MCF 10A (cell line): ENCODE measurements at regions of chr22 and their contacts with region 1.

Region 1: DNA sequence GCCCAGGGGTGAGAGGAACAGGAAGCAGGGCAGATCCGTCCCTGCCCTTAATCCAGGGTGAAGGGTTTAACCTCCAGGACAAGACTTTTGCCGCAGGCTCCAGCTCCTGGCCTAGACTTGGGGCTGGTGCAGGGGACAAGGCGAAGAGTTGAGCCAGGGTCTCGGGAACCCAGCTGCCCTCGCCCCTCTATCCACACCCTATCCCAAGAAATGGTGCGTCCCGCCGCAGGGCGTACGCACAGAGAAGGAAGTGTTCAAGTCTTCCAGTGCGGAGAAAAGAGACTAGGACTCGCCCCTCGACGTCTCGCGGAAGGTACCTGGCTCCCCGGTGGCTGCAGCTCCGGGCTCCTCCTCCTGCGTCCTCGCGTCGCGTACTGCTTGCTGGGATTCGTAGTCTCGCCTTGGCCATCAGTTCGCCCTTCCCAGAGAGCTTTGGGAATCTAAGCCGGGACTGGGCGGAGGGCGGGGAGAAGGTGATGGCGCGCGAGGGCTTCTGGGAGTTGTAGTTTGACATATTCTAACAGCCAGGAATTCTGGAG is at the start of gene ZMAT5:
- DNase-seq: peak; percentile 99
- H3K4me3 Mint-ChIP-seq: peak within 1 kb of the TSS; percentile 99
- H3K27ac Mint-ChIP-seq: peak within 1 kb of the TSS; percentile 100
- H3K4me1 Mint-ChIP-seq: peaks cover 11% of the 10 kb centered on the region
- H3K27me3 Mint-ChIP-seq: no peaks in the 10 kb centered on the region
- CTCF ChIP-seq: no peak
- total RNA-seq, gene ZMAT5: 19.0 and 25.6 TPM in 2 replicates

Region 2: DNA sequence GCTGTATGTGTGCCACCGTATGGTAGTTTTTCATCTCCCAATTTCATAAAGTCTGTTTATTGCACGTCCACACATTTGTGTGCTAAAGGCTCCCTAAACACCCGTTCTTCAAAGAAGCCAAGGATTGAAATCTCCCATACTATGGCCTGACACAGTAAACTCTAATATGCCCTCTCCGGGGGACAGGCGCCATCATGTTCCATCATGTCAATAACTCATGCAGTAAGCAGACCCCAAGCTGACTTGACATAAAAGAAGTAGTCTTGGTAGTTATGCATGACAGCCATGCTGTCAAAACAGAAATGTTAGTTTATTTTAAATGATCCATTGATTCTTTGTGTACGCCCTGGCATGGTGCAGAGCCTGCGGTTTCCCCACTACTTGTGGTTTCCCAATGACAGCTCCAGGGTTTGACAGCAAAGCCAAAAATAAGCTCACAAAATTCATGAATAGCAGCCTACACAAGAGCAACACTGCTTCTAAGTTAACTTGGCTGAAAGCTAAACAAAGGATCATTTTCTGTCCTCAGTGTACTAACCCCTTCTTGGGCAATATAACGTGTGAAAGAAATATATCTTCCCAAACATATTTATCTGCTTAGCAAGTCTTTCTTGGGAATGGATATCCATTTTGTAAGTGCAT is 103.4 kb before region 1 on chr22:
- CTCF ChIA-PET with region 1: no interaction called
- POLR2A ChIA-PET with region 1: no interaction called
- intact Hi-C with region 1: no loop called
- DNase-seq: no peak
- H3K4me3 Mint-ChIP-seq: no peak overlapping the region
- H3K27ac Mint-ChIP-seq: no peak overlapping the region
- H3K4me1 Mint-ChIP-seq: no peaks in the 10 kb centered on the region
- H3K27me3 Mint-ChIP-seq: no peaks in the 10 kb centered on the region
- CTCF ChIP-seq: no peak

Region 3: DNA sequence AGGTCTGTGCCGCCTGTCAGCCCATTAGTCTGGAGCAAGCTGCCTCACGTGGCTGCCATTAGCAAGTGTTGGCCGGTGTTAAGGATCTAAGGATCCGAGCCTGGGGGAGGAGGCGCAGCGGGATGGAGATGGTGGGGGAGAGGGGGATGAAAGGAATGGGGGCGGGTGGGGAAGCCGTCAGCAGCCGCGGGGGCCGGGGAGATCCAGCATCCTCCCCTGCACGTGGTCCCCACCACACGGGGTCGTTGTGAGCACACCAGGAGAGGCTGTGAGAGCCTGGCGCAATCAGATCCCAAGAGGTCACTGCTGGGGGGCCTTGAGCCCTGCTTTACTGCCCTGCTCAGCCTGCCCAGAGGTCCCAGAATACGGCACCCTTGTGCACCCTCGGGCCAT is 39.6 kb before region 1 on chr22:
- CTCF ChIA-PET with region 1: no interaction called
- POLR2A ChIA-PET with region 1: no interaction called
- intact Hi-C with region 1: no loop called
- DNase-seq: peak; percentile 31
- H3K4me3 Mint-ChIP-seq: no peak overlapping the region
- H3K27ac Mint-ChIP-seq: no peak overlapping the region
- H3K4me1 Mint-ChIP-seq: no peaks in the 10 kb centered on the region
- H3K27me3 Mint-ChIP-seq: no peaks in the 10 kb centered on the region
- CTCF ChIP-seq: peak; percentile 23

Region 4: GRCh38 chr22:29744902-29745301 is 21.8 kb before region 1 on chr22:
- CTCF ChIA-PET with region 1: no interaction called
- POLR2A ChIA-PET with region 1: interaction called, 16 read pairs
- intact Hi-C with region 1: no loop called
- DNase-seq: peak; percentile 91
- H3K4me3 Mint-ChIP-seq: peak overlapping the region; percentile 21
- H3K27ac Mint-ChIP-seq: peak overlapping the region; percentile 81
- H3K4me1 Mint-ChIP-seq: peaks cover 19% of the 10 kb centered on the region
- H3K27me3 Mint-ChIP-seq: no peaks in the 10 kb centered on the region
- CTCF ChIP-seq: no peak